ENCODE measurements at regions of chr2 and their contacts with region 1.

Region 1: GRCh38 chr2:224086226-224086914 is 47.3 kb upstream of the SERPINE2 start:
- DNase-seq: peak; percentile 70 to 99
- H3K4me3 ChIP-seq: peak overlapping the region; percentile 0; the same call in 1 of the 2 replicates
- H3K27ac ChIP-seq: peak overlapping the region; percentile 92
- H3K4me1 ChIP-seq: peaks cover 42% of the 10 kb centered on the region
- H3K27me3 ChIP-seq: no peaks in the 10 kb centered on the region
- CTCF ChIP-seq: no peak

Region 2: GRCh38 chr2:224058048-224058775 is 28.2 kb before region 1 on chr2:
- CTCF ChIA-PET with region 1: no interaction called
- POLR2A ChIA-PET with region 1: no interaction called
- intact Hi-C with region 1: no loop called
- DNase-seq: no peak
- H3K4me3 ChIP-seq: no peak overlapping the region
- H3K27ac ChIP-seq: no peak overlapping the region
- H3K4me1 ChIP-seq: no peaks in the 10 kb centered on the region
- H3K27me3 ChIP-seq: no peaks in the 10 kb centered on the region
- CTCF ChIP-seq: 0 out of 2 replicates have a peak, but pooled peaks have one; percentile 23

Region 3: DNA sequence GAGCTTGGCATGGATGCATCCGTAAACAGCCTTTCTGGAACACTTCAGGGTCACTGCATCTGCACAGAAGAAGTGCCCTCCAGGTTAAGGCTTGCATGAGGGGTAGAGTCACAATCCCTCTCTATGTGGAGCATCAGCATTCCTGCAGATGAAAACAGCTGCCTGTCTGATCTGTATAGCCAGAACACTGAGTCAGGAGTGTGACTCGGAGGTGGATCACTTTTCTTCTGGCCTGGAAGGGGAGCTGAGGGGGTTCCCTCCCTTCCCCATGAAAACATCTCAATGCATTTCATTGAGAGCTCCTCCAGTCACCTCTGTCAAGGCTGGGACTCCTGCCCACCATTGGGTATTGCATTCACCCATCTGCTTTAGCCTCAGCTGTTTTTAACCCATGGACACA is 25.2 kb after region 1 on chr2:
- CTCF ChIA-PET with region 1: no interaction called
- POLR2A ChIA-PET with region 1: no interaction called
- intact Hi-C with region 1: no loop called
- DNase-seq: no peak
- H3K4me3 ChIP-seq: no peak overlapping the region
- H3K27ac ChIP-seq: no peak overlapping the region
- H3K4me1 ChIP-seq: no peaks in the 10 kb centered on the region
- H3K27me3 ChIP-seq: no peaks in the 10 kb centered on the region
- CTCF ChIP-seq: no peak

Region 4: DNA sequence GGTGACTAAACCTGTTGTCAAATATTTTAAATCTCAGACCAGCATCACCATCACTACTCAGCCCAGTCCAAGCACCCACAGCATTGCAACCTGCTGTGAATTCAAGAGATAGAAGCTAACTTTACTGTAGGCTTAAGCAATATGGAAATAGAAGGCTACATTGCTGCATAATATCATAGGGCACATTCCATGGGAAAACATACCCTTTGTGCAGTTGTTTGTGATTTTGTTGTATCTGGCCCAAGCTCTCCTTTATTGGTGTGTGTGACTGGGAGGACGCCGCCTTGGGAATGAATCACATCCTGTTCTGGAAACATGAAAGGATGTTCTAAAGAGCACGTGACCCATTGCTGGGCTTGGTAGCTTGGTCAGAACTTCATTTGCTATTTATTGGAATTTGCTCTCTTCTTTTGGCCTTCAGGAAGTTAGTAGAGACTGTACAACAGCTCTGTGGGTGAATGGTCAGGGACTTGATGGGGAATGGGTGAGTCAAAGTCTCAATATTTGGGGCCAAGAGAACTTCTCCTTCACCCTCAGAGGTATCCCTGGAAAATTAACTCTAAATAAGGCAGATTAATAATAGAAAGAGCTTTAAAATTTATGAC is 59.5 kb after region 1 on chr2:
- CTCF ChIA-PET with region 1: no interaction called
- POLR2A ChIA-PET with region 1: no interaction called
- intact Hi-C with region 1: loop called (anchors 2 kb)
- DNase-seq: peak; percentile 36 to 51
- H3K4me3 ChIP-seq: no peak overlapping the region
- H3K27ac ChIP-seq: 0 out of 2 replicates have a peak overlapping the region, but pooled peaks have one; percentile 5
- H3K4me1 ChIP-seq: peaks cover 72% of the 10 kb centered on the region
- H3K27me3 ChIP-seq: no peaks in the 10 kb centered on the region
- CTCF ChIP-seq: no peak

Region 5: DNA sequence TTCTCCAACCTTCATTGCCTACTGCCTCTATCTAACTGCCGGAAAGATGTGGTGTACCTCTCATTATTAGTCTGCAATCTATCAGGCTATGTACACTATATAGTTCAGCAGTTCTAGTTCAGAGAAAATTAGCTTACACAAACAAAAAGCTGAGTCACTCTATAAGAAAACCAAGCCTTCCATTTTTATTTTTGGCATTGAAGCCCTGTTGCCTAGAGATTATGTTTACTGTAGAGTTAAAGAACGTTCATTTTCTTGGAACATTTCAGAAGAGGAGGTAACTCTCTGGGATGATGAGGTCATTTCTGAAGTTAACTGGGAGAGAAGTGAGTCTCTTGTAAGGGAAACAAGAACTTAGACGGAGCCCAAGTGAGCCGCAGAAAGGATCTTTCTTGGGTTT is 182.1 kb after region 1 on chr2:
- CTCF ChIA-PET with region 1: no interaction called
- POLR2A ChIA-PET with region 1: interaction called, 3 read pairs
- intact Hi-C with region 1: loop called (anchors 5 kb)
- DNase-seq: peak; percentile 27 to 93
- H3K4me3 ChIP-seq: no peak overlapping the region
- H3K27ac ChIP-seq: peak overlapping the region; percentile 53
- H3K4me1 ChIP-seq: peaks cover 28% of the 10 kb centered on the region
- H3K27me3 ChIP-seq: no peaks in the 10 kb centered on the region
- CTCF ChIP-seq: no peak

Region 6: GRCh38 chr2:224469374-224469964 is 383.1 kb after region 1 on chr2:
- CTCF ChIA-PET with region 1: no interaction called
- POLR2A ChIA-PET with region 1: no interaction called
- intact Hi-C with region 1: no loop called
- DNase-seq: no peak
- H3K4me3 ChIP-seq: no peak overlapping the region
- H3K27ac ChIP-seq: no peak overlapping the region
- H3K4me1 ChIP-seq: no peaks in the 10 kb centered on the region
- H3K27me3 ChIP-seq: no peaks in the 10 kb centered on the region
- CTCF ChIP-seq: no peak